ENCODE measurements at regions of chr18 and their contacts with region 1.

Region 1: GRCh38 chr18:14924226-14924625 is 176.3 kb downstream of the ANKRD30B start:
- DNase-seq: peak; percentile 15
- H3K4me3 ChIP-seq: no peak overlapping the region
- H3K27ac ChIP-seq: no peak overlapping the region
- H3K4me1 ChIP-seq: no peaks in the 10 kb centered on the region
- H3K27me3 ChIP-seq: no peaks in the 10 kb centered on the region
- CTCF ChIP-seq: no peak

Region 2: GRCh38 chr18:14747513-14748474 is 176.4 kb before region 1 on chr18 and contains the start of gene ANKRD30B:
- CTCF ChIA-PET with region 1: no interaction called
- dilution Hi-C with region 1: no loop called
- in situ Hi-C with region 1: no loop called
- intact Hi-C with region 1: no loop called
- DNase-seq: no peak
- H3K4me3 ChIP-seq: no peak within 1 kb of the TSS
- H3K27ac ChIP-seq: no peak within 1 kb of the TSS
- H3K4me1 ChIP-seq: no peaks in the 10 kb centered on the region
- H3K27me3 ChIP-seq: no peaks in the 10 kb centered on the region
- CTCF ChIP-seq: no peak
- total RNA-seq, gene ANKRD30B: not detected

Region 3: DNA sequence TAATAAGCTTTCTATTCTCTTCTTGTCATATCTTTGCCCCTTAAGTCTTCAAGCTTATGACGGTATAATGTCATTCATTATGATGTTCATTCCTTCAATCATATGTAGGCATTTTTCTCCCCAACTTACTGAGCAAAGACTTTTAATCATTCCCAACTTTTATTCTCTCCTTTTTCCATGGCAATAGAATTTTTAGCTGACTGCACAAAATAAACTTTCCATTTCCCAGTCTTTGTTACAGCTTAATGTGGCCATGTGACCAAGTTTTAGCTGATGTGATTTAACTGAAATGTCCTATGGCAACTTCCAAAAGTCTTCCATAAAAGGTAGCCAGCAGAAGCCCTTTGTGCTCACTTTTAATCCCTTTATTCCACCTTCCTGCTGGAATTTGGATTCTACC is 23.8 kb before region 1 on chr18:
- CTCF ChIA-PET with region 1: no interaction called
- dilution Hi-C with region 1: no loop called
- in situ Hi-C with region 1: no loop called
- intact Hi-C with region 1: no loop called
- DNase-seq: no peak
- H3K4me3 ChIP-seq: no peak overlapping the region
- H3K27ac ChIP-seq: no peak overlapping the region
- H3K4me1 ChIP-seq: no peaks in the 10 kb centered on the region
- H3K27me3 ChIP-seq: no peaks in the 10 kb centered on the region
- CTCF ChIP-seq: no peak

Region 4: DNA sequence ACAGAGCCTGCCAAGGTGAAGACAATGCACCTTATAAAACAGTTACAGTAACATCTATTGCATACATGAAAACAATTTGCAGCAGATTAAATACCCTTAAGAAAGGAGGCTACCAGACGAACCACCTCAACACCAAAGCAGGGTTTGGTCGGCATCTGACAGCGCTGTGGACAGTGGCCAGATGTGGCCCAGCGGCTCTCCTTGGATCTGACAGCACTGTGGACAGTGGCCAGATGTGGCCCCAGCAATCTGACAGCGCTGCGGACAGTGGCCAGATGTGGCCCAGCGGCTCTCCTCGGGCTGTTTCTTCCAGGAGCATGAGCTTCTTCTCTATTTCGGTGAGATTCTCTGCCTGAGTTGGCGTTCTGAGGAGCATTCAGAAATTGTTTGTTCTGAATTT is 35.3 kb after region 1 on chr18:
- CTCF ChIA-PET with region 1: no interaction called
- dilution Hi-C with region 1: no loop called
- in situ Hi-C with region 1: no loop called
- intact Hi-C with region 1: loop called (anchors 5 kb)
- DNase-seq: no peak
- H3K4me3 ChIP-seq: no peak overlapping the region
- H3K27ac ChIP-seq: no peak overlapping the region
- H3K4me1 ChIP-seq: no peaks in the 10 kb centered on the region
- H3K27me3 ChIP-seq: no peaks in the 10 kb centered on the region
- CTCF ChIP-seq: no peak

Region 5: GRCh38 chr18:14971461-14972185 is 47.4 kb after region 1 on chr18:
- CTCF ChIA-PET with region 1: no interaction called
- dilution Hi-C with region 1: no loop called
- in situ Hi-C with region 1: no loop called
- intact Hi-C with region 1: loop called (anchors 5 kb)
- DNase-seq: peak; percentile 56
- H3K4me3 ChIP-seq: no peak overlapping the region
- H3K27ac ChIP-seq: no peak overlapping the region
- H3K4me1 ChIP-seq: peaks cover 16% of the 10 kb centered on the region
- H3K27me3 ChIP-seq: no peaks in the 10 kb centered on the region
- CTCF ChIP-seq: no peak

Region 6: DNA sequence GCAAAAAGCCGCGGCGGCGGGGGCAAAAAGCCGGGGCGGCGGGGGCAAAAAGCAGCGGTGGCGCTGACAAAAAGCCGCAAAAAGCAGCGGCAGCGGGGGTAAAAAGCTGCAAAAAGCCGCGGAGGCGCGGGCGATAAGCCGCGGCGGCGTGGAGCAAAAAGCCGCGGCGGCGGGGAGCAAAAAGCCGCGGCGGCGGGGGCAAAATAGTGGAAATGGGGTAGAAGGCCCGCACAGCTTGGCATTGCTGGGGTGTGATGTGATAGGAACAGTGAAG is 273.8 kb after region 1 on chr18:
- CTCF ChIA-PET with region 1: no interaction called
- dilution Hi-C with region 1: no loop called
- in situ Hi-C with region 1: no loop called
- intact Hi-C with region 1: no loop called
- DNase-seq: no peak
- H3K4me3 ChIP-seq: peak overlapping the region in 2 of 3 experiments; percentile 18 to 22
- H3K27ac ChIP-seq: no peak overlapping the region
- H3K4me1 ChIP-seq: no peaks in the 10 kb centered on the region
- H3K27me3 ChIP-seq: peaks cover 8% of the 10 kb centered on the region
- CTCF ChIP-seq: no peak